Endothelial cell of umbilical vein (primary cell): ENCODE measurements at regions of chr7 and their contacts with region 1.

Region 1: GRCh38 chr7:876167-876967 is at the start of gene GET4:
- DNase-seq: peak; percentile 96
- H3K4me3 ChIP-seq: peak within 1 kb of the TSS; percentile 66 to 99 (median 75)
- H3K27ac ChIP-seq: peak within 1 kb of the TSS; percentile 45
- H3K4me1 ChIP-seq: peaks cover 12% of the 10 kb centered on the region
- H3K27me3 ChIP-seq: no peaks in the 10 kb centered on the region
- CTCF ChIP-seq: peak in 1 of 2 donors; percentile 14
- POLR2A ChIP-seq: peak; percentile 80
- total RNA-seq, gene GET4: 44.7 and 48.4 TPM in 2 replicates

Region 2: GRCh38 chr7:604001-604883 is 272.1 kb before region 1 on chr7:
- CTCF ChIA-PET with region 1: no interaction called
- POLR2A ChIA-PET with region 1: no interaction called
- dilution Hi-C with region 1: no loop called
- intact Hi-C with region 1: loop called (anchors 5 kb)
- DNase-seq: peak; percentile 93
- H3K4me3 ChIP-seq: no peak overlapping the region
- H3K27ac ChIP-seq: peak overlapping the region; percentile 97
- H3K4me1 ChIP-seq: peaks cover 60% of the 10 kb centered on the region
- H3K27me3 ChIP-seq: no peaks in the 10 kb centered on the region
- CTCF ChIP-seq: no peak
- POLR2A ChIP-seq: no peak

Region 3: GRCh38 chr7:699061-699807 is 177.1 kb before region 1 on chr7:
- CTCF ChIA-PET with region 1: no interaction called
- POLR2A ChIA-PET with region 1: no interaction called
- dilution Hi-C with region 1: no loop called
- intact Hi-C with region 1: no loop called
- DNase-seq: peak; percentile 53
- H3K4me3 ChIP-seq: no peak overlapping the region
- H3K27ac ChIP-seq: no peak overlapping the region
- H3K4me1 ChIP-seq: peaks cover 13% of the 10 kb centered on the region
- H3K27me3 ChIP-seq: no peaks in the 10 kb centered on the region
- CTCF ChIP-seq: no peak
- POLR2A ChIP-seq: no peak

Region 4: DNA sequence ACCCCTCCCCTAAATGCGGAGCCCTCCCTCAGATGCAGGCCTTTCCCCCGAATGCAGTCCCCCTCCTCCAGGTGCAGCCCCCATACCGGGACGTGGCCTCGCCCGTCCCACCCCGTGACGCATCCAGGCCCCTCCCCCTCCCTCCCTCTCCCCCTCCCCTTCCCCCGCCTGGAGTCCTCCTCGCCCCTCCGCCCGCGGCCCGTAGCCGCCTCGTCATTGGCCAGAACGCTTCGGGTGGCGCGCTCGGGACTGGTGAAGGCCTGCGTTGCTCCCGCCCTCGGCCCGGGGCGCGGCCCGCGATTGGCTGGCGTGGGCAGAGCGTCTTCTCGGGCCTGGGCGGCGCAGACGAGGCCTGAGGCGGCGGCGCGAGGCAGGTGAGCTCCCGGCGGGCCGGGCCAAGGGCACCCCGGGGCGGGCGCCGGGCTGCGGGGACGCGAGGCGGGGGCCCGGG is 60.0 kb before region 1 on chr7:
- CTCF ChIA-PET with region 1: interaction called, 17 read pairs
- POLR2A ChIA-PET with region 1: no interaction called
- dilution Hi-C with region 1: no loop called
- intact Hi-C with region 1: loop called (anchors 2 kb)
- DNase-seq: peak; percentile 95
- H3K4me3 ChIP-seq: peak overlapping the region in 2 of 3 experiments; percentile 18 to 69
- H3K27ac ChIP-seq: no peak overlapping the region
- H3K4me1 ChIP-seq: peaks cover 20% of the 10 kb centered on the region
- H3K27me3 ChIP-seq: no peaks in the 10 kb centered on the region
- CTCF ChIP-seq: no peak
- POLR2A ChIP-seq: peak; percentile 30

Region 5: DNA sequence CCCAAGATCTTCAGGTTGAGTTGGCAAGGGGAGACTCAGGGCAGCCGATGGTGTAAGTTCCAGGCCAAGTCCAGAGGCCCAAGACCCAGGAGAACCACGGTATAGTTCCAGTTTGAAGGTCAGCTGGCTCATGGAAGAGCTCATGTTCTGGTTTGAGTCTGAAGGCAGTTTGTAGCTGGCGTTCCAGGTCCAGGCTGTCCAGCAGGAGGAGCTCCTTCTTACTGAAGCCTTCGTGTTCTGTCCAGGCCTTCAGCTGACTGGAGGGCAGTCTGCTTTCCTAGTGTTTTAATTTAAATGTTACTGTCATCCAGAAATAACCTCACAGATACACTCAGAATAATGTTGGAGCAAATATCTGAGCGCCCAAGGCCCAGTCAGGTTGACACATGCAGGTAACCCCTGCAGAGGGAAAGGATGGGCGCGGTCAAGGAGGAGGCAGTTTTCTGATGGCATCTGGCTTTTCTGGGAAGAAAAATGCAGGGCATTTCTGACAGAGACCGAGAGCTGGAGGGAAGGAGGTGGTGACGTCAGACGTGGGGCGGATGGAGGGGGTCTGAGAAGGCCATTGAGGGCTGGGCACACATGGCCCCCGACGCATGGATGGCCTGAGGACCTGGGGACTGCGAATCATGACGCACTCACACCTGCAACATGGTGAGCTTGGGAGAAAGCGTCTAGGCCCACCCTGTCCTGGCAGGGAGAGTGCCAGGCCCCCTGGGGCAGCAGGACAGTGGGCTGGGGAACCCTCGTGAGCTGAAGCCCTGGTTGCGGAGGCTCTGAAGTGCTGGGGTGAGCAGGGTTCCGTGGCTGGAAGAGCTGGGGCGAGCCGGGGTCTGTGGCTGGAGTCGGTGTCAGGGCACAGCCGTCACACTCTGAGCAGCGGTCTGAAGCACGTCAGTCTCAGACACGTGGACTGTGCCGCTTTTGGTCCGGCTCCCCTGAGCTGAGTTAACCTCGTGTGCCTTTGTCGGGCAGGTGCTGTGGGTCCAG is 39.7 kb before region 1 on chr7:
- CTCF ChIA-PET with region 1: interaction called, 37 read pairs
- POLR2A ChIA-PET with region 1: no interaction called
- dilution Hi-C with region 1: no loop called
- intact Hi-C with region 1: loop called (anchors 1 kb)
- DNase-seq: peak; percentile 60
- H3K4me3 ChIP-seq: no peak overlapping the region
- H3K27ac ChIP-seq: no peak overlapping the region
- H3K4me1 ChIP-seq: peaks cover 14% of the 10 kb centered on the region
- H3K27me3 ChIP-seq: no peaks in the 10 kb centered on the region
- CTCF ChIP-seq: peak; percentile 67 to 77
- POLR2A ChIP-seq: no peak

Region 6: DNA sequence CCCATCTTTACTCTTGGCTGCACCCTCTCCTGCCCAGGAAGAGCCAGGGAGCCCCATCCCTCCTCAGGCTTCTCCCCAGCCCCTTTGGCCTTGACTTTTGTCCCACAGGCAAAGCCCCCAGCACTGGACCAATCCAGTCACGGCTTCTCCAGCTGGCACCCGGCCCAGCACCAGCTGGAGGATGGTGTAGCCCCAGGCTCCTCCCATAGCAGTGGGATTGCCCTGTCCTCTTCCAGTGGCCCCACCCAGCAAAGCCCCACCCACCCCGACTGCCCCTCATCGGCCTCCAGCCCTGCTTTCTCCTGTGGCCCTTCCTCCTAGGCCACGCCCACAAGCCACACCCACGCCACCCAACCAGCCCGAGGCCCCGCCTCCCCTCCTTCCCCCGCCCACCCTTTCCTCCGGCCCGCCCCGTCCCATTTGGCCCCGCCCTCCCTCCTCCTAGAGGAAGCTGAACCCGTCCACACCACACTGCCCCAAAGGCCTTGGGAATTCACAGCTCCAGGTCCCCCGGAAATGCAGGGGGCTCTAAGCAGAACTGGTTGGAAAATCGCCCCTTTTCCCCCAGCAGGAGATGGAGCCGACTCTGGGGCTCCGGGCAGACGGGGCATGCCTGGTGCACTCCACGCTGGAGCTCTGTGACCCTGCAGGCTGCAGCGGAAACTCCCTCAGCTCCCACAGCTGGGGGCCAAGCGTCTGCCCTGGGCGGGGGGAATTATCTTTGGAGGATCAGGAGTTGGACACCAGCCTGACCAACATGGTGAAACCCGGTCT is 25.2 kb after region 1 on chr7:
- CTCF ChIA-PET with region 1: interaction called, 4 read pairs
- POLR2A ChIA-PET with region 1: no interaction called
- dilution Hi-C with region 1: no loop called
- intact Hi-C with region 1: loop called (anchors 1 kb)
- DNase-seq: peak; percentile 55
- H3K4me3 ChIP-seq: no peak overlapping the region
- H3K27ac ChIP-seq: no peak overlapping the region
- H3K4me1 ChIP-seq: peaks cover 6% of the 10 kb centered on the region
- H3K27me3 ChIP-seq: peaks cover 3 to 5% of the 10 kb centered on the region in 2 experiments
- CTCF ChIP-seq: no peak
- POLR2A ChIP-seq: no peak

Region 7: DNA sequence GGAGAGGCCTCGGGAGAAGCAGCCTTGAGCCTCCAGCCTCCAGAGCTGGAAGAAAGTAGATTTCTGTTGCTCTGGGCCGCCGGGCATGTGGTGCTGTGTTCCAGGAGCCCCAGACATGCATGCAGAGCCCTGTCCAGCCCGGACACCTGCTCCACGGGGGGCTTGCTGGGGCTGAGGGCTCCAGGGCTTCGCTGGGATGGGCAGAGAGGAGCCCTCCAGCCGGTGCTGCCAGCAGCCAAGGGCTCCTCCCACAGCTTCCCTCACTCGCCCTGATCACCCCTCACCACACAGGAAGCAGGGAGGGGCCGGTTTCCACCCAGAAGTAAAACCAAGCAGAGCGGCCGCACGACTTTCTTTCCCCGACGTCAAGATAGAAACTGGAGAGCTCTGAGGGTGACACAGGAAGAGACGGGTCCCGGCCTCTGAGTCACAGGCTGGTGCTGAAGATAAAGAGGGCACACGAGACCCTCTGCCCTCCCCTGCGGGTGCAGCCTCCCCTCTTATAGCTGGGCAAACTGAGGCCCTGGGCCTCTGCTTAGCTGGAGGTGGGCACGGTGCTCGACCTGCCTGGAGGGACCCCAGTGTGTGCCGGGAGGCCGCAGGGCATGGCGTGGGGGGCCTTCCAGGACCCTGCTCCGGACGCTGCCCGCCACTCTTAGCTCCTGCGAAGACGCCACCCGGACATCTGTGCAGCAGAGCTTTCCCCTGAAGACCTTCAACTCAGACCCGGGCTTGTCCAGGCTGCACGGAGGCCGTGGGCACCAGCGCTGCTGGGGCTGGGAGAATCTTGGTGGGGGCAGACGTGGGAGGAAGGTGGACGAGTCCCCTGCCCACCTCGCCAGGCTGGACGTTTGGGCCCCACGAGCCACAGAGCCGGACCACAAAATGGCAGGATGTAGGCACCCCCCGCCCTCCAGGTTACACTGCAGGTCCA is 47.0 kb after region 1 on chr7:
- CTCF ChIA-PET with region 1: no interaction called
- POLR2A ChIA-PET with region 1: no interaction called
- dilution Hi-C with region 1: no loop called
- intact Hi-C with region 1: no loop called
- DNase-seq: no peak
- H3K4me3 ChIP-seq: no peak overlapping the region
- H3K27ac ChIP-seq: no peak overlapping the region
- H3K4me1 ChIP-seq: peaks cover 11% of the 10 kb centered on the region
- H3K27me3 ChIP-seq: no peaks in the 10 kb centered on the region
- CTCF ChIP-seq: no peak
- POLR2A ChIP-seq: no peak